Activated naive CD4-positive, alpha-beta T cell treated with anti-CD3 and anti-CD28 coated beads, Interleukin-2, amount 10 ng/mL, durations not matched to agents 7 days and 5 days (primary cell): ENCODE measurements at regions of chr2 and their contacts with region 1.

Region 1: DNA sequence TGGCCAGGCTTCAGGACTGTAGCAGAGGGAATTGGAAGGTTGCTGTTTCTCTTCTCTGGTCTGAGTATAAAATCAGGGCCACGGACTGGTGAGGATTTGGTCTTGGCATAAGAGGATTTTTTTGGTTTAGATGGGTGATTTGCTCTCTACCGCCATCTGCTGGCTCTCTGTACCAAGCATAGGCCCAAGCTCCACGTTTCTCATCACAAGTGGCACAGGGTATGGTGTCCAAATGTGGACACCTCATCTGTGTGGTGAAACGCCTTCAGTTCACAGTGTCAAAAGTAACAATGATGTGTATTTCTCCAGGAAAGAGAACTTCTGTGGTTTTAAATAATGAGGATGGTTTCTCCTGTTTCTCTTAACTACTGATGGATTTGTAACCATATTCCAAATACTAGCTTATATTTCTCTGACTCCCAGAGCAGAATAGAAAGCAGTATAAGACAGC is 115.1 kb downstream of the EML6 start:
- DNase-seq: peak; percentile 70
- H3K4me3 Mint-ChIP-seq: no peak overlapping the region
- H3K27ac Mint-ChIP-seq: no peak overlapping the region
- H3K4me1 Mint-ChIP-seq: no peaks in the 10 kb centered on the region
- H3K27me3 Mint-ChIP-seq: peaks cover 14% of the 10 kb centered on the region

Region 2: GRCh38 chr2:54763636-54764291 is 74.8 kb before region 1 on chr2:
- CTCF ChIA-PET with region 1: interaction called, 15 read pairs
- DNase-seq: peak; percentile 24
- H3K4me3 Mint-ChIP-seq: no peak overlapping the region
- H3K27ac Mint-ChIP-seq: no peak overlapping the region
- H3K4me1 Mint-ChIP-seq: peaks cover 6% of the 10 kb centered on the region
- H3K27me3 Mint-ChIP-seq: peaks cover 8% of the 10 kb centered on the region

Region 3: DNA sequence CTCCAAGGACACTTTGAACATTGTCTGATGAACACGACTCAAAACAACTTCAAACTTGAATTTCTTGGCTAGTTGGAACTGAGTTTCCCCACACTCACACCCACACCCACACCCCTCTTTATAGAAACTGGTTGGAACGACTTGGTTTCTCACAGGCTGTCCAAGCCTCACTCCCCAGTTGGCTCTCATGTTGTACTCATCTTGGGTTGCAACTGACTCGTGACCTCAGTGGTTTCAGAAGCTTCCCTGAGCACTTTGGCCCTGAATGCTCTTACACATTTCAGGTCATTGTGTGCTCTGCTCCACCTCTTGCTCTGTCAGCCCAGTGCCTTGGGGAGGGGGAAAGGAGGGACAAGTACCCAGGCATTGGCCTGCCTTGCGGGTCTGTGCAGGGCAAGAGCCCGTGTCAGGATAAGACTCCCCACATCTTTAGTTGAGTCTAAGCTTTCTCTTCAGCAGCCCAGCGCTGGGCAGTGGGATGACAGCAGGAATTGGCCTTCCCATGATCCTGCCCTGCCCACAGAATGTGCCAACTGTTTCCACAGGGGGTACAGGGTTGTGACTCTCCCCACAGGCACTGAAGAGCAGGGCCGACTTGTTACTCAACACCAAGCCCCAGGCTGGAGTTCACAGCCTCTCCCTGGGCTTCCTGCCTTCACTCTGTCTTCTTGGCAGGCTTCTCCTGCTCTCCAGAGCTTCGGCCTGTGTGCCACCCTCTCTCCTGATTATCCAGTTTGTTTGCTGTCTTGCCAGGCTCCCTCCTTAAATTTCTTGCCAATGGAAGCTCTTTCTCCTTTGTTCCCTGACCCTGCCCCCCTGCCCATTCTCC is 107.0 kb after region 1 on chr2:
- CTCF ChIA-PET with region 1: no interaction called
- DNase-seq: no peak
- H3K4me3 Mint-ChIP-seq: no peak overlapping the region
- H3K27ac Mint-ChIP-seq: peak overlapping the region; percentile 50
- H3K4me1 Mint-ChIP-seq: peaks cover 2% of the 10 kb centered on the region
- H3K27me3 Mint-ChIP-seq: peaks cover 5% of the 10 kb centered on the region